ENCODE measurements at regions of chr5 and their contacts with region 1.

Region 1: DNA sequence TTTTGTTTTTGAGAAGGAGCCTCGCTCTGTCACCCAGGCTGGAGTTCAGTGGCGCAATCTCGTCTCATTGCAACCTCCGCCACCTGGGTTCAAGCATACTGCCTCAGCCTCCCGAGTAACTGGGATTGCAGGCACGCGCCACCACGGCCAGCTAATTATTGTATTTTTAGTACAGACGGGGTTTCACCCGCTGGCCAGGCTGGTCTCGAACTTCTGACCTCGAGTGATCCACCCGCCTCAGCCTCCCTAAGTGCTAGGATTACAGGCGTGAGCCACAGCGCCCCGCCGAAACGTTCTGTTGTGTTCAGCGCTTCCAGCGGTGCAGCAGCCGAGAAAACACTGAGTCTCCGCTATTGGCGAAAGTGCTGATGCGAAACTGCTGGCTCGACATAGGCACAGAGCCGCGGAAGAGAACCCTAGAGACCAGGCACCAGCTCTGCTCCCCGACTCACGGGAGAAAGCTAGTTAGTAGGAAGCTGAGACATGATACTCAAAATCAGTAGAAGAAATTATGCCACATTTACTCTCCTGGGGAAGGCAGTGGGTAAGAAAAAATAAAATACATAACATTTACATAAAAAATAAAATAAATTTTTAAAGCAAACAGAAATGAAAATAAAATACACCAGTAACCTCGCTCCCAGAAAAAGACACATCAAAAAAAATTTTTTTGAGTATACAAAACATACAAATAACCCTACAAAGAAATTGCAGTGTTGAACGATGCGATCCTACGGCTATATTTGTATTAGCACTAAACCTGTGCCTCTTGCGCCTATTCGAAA is 31.6 kb downstream of the ANXA2R start:
- DNase-seq: peak; percentile 84 to 95 (median 89)
- H3K4me3 ChIP-seq: peak overlapping the region; percentile 79
- H3K4me3 Mint-ChIP-seq: peak overlapping the region; percentile 85 to 98 (median 93)
- H3K27ac ChIP-seq: peak overlapping the region; percentile 80
- H3K27ac Mint-ChIP-seq: peak overlapping the region; percentile 97 to 100 (median 99)
- H3K4me1 ChIP-seq: peaks cover 26% of the 10 kb centered on the region
- H3K4me1 Mint-ChIP-seq: peaks cover 36 to 40% (median 39%) of the 10 kb centered on the region in 3 donors
- H3K27me3 ChIP-seq: no peaks in the 10 kb centered on the region
- H3K27me3 Mint-ChIP-seq: peaks cover 0 to 6% of the 10 kb centered on the region in 2 donors

Region 2: GRCh38 chr5:42908509-42909488 is 99.8 kb before region 1 on chr5:
- CTCF ChIA-PET with region 1: interaction called, 23 read pairs
- POLR2A ChIA-PET with region 1: interaction called, 7 read pairs
- DNase-seq: peak; percentile 82 to 95 (median 88)
- H3K4me3 ChIP-seq: peak overlapping the region; percentile 78
- H3K4me3 Mint-ChIP-seq: peak overlapping the region; percentile 78 to 98 (median 94)
- H3K27ac ChIP-seq: no peak overlapping the region
- H3K27ac Mint-ChIP-seq: peak overlapping the region; percentile 65 to 98 (median 94)
- H3K4me1 ChIP-seq: peaks cover 10% of the 10 kb centered on the region
- H3K4me1 Mint-ChIP-seq: peaks cover 15 to 19% (median 16%) of the 10 kb centered on the region in 3 donors
- H3K27me3 ChIP-seq: peaks cover 6% of the 10 kb centered on the region
- H3K27me3 Mint-ChIP-seq: peaks cover 8 to 15% of the 10 kb centered on the region in 2 donors

Region 3: GRCh38 chr5:42950440-42951292 is 57.9 kb before region 1 on chr5:
- CTCF ChIA-PET with region 1: interaction called, 34 read pairs
- POLR2A ChIA-PET with region 1: interaction called, 57 read pairs
- DNase-seq: peak; percentile 43 to 81 (median 61)
- H3K4me3 ChIP-seq: peak overlapping the region; percentile 97
- H3K4me3 Mint-ChIP-seq: peak overlapping the region; percentile 91 to 98 (median 95)
- H3K27ac ChIP-seq: peak overlapping the region; percentile 98
- H3K27ac Mint-ChIP-seq: peak overlapping the region; percentile 99 to 100 (median 100)
- H3K4me1 ChIP-seq: peaks cover 27% of the 10 kb centered on the region
- H3K4me1 Mint-ChIP-seq: peaks cover 29 to 50% (median 39%) of the 10 kb centered on the region in 3 donors
- H3K27me3 ChIP-seq: no peaks in the 10 kb centered on the region
- H3K27me3 Mint-ChIP-seq: peaks cover 0 to 16% of the 10 kb centered on the region in 2 donors

Region 4: GRCh38 chr5:43019614-43020293 is 11.2 kb after region 1 on chr5:
- CTCF ChIA-PET with region 1: interaction called, 149 read pairs
- POLR2A ChIA-PET with region 1: interaction called, 277 read pairs
- DNase-seq: peak; percentile 75 to 93 (median 87)
- H3K4me3 ChIP-seq: peak overlapping the region; percentile 87
- H3K4me3 Mint-ChIP-seq: peak overlapping the region; percentile 97 to 100 (median 99)
- H3K27ac ChIP-seq: peak overlapping the region; percentile 96
- H3K27ac Mint-ChIP-seq: peak overlapping the region; percentile 98 to 100 (median 100)
- H3K4me1 ChIP-seq: peaks cover 36% of the 10 kb centered on the region
- H3K4me1 Mint-ChIP-seq: peaks cover 40 to 56% (median 54%) of the 10 kb centered on the region in 3 donors
- H3K27me3 ChIP-seq: no peaks in the 10 kb centered on the region
- H3K27me3 Mint-ChIP-seq: peaks cover 0 to 8% of the 10 kb centered on the region in 2 donors

Region 5: GRCh38 chr5:43066799-43067741 is 58.5 kb after region 1 on chr5:
- CTCF ChIA-PET with region 1: interaction called, 31 read pairs
- POLR2A ChIA-PET with region 1: interaction called, 75 read pairs
- DNase-seq: peak; percentile 75 to 92 (median 87)
- H3K4me3 ChIP-seq: peak overlapping the region; percentile 99
- H3K4me3 Mint-ChIP-seq: peak overlapping the region; percentile 91 to 99 (median 98)
- H3K27ac ChIP-seq: peak overlapping the region; percentile 99
- H3K27ac Mint-ChIP-seq: peak overlapping the region; percentile 96 to 100 (median 99)
- H3K4me1 ChIP-seq: peaks cover 31% of the 10 kb centered on the region
- H3K4me1 Mint-ChIP-seq: peaks cover 42 to 59% (median 52%) of the 10 kb centered on the region in 3 donors
- H3K27me3 ChIP-seq: no peaks in the 10 kb centered on the region
- H3K27me3 Mint-ChIP-seq: no peaks in the 10 kb centered on the region